MCF 10A (cell line): ENCODE measurements at regions of chr12 and their contacts with region 1.

Region 1: GRCh38 chr12:53938326-53939140 is at the start of gene HOXC13:
- DNase-seq: peak; percentile 100
- H3K4me3 Mint-ChIP-seq: peak within 1 kb of the TSS; percentile 78
- H3K27ac Mint-ChIP-seq: peak within 1 kb of the TSS; percentile 68
- H3K4me1 Mint-ChIP-seq: peaks cover 34% of the 10 kb centered on the region
- H3K27me3 Mint-ChIP-seq: no peaks in the 10 kb centered on the region
- CTCF ChIP-seq: peak; percentile 6
- total RNA-seq, gene HOXC13: 5.3 and 6.0 TPM in 2 replicates

Region 2: DNA sequence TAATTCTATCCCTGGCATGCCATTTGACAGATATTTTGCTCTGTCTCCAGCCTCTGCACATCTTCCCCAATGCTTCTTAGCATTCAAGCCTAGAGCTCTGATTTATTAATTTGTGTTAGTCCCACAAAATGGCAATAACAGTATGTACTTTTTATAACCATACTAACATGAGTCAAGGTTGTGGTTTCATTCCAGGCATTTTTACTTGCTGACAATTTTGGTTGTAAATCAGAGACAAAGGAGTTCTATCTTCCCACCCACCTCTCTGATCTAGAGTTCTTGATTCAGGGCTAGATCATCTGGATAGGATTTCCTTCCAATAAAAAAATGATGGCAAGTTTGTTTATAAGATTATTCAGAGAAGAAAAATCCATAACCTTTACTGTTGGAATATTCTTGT is 168.3 kb before region 1 on chr12:
- CTCF ChIA-PET with region 1: interaction called, 6 read pairs
- POLR2A ChIA-PET with region 1: interaction called, 21 read pairs
- intact Hi-C with region 1: no loop called
- DNase-seq: peak; percentile 61
- H3K4me3 Mint-ChIP-seq: peak overlapping the region; percentile 0
- H3K27ac Mint-ChIP-seq: peak overlapping the region; percentile 6
- H3K4me1 Mint-ChIP-seq: peaks cover 25% of the 10 kb centered on the region
- H3K27me3 Mint-ChIP-seq: no peaks in the 10 kb centered on the region
- CTCF ChIP-seq: no peak

Region 3: DNA sequence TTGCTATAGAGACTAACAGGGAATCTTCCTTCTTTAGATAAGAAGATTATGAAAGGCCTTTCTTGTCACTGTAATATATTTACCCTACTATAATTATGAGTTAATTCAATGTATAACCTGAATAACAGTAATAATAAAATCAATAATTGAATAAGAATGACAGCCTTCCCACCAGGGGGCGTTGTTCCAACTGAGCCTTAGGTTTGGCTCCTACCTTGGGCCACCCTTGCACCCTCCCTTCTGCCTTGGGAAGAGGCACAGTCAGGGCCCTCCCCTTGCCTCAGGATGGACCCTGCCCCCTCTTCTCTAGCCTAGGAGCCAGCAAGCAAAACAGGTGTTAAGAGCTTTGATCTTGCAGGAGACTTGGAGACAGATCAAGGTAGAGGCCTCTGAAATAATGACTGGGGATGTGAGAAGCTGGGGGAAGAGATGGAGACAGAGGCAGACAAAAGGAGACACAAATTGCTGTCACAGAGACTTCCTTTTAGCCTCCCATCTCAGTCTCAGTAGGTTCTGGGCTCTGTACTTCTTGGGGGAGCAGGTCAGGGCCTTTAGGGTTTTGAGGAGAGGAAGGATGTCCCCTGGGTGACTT is 146.7 kb before region 1 on chr12:
- CTCF ChIA-PET with region 1: interaction called, 12 read pairs
- POLR2A ChIA-PET with region 1: no interaction called
- intact Hi-C with region 1: loop called (anchors 5 kb)
- DNase-seq: peak; percentile 52
- H3K4me3 Mint-ChIP-seq: no peak overlapping the region
- H3K27ac Mint-ChIP-seq: no peak overlapping the region
- H3K4me1 Mint-ChIP-seq: no peaks in the 10 kb centered on the region
- H3K27me3 Mint-ChIP-seq: no peaks in the 10 kb centered on the region
- CTCF ChIP-seq: peak; percentile 44

Region 4: DNA sequence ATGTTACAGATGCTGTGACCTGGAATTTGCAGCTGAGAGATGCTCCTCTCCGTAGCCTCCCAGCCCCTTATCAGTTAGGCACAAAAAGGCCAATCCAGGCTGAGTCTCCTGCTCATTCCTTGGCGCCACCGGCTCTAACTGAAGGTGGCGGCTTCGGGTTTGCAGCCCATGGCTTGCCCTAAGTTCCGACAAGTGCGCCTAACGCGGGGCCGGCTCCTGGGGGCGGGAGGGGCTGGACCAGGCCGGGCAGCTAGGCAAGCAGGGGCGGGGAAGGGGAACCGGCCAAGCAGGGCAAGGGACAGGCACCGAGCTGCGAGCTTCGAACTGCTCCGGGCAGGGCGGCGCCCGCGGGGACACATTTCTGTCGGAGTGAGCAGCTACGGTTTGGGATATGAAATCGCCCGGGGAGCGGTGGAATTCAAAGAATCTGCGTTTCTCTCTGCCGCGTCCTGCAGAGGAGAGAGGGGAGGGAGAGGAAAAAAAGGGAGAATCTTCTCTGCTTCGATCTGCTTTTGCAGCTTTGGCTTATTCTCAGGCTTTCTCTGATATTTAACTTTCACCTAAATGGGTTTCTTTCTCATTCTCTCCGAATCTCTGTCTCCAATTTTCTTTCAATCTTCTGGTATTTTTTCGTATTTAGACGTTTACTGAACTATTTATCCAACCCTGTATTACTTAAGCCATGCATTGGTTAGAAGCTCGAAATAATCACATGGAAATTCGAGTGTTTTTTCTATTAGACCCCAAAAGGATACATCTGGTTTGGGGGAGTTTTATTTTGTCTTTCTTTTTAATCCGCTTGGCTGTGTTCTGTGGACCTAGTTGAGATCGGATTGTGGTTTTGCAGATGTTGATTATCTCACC is 14.6 kb after region 1 on chr12:
- CTCF ChIA-PET with region 1: no interaction called
- POLR2A ChIA-PET with region 1: interaction called, 16 read pairs
- intact Hi-C with region 1: no loop called
- DNase-seq: peak; percentile 12
- H3K4me3 Mint-ChIP-seq: peak overlapping the region; percentile 49
- H3K27ac Mint-ChIP-seq: no peak overlapping the region
- H3K4me1 Mint-ChIP-seq: no peaks in the 10 kb centered on the region
- H3K27me3 Mint-ChIP-seq: no peaks in the 10 kb centered on the region
- CTCF ChIP-seq: no peak

Region 5: DNA sequence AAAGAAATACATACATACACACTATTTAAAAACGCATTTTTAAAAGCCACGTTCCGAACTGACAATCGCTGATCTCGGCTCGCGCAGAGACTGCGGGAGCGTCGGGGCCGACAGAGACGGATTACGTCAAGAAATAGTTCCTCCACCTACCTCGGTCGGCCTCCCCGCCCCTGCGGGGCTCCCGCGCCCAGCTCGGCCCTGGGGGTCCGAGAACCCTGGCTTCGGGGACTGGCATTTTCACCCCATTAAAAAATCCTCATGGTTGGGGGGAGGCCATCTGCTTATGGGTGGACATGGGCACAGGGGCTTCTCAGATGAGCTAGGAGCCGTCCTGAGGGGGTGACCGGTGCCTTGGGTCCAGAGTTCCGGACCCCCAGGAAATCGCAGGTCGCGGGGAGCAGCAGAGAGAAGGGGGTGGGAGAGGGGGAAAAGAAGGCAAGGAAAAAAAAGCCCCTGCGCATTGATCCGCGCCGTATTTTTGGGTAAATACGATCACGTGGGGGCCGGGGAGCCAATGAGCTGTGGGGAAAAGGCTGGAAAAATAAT is 61.1 kb after region 1 on chr12:
- CTCF ChIA-PET with region 1: interaction called, 5 read pairs
- POLR2A ChIA-PET with region 1: interaction called, 32 read pairs
- intact Hi-C with region 1: no loop called
- DNase-seq: peak; percentile 90
- H3K4me3 Mint-ChIP-seq: peak overlapping the region; percentile 89
- H3K27ac Mint-ChIP-seq: peak overlapping the region; percentile 97
- H3K4me1 Mint-ChIP-seq: peaks cover 12% of the 10 kb centered on the region
- H3K27me3 Mint-ChIP-seq: no peaks in the 10 kb centered on the region
- CTCF ChIP-seq: no peak

Region 6: DNA sequence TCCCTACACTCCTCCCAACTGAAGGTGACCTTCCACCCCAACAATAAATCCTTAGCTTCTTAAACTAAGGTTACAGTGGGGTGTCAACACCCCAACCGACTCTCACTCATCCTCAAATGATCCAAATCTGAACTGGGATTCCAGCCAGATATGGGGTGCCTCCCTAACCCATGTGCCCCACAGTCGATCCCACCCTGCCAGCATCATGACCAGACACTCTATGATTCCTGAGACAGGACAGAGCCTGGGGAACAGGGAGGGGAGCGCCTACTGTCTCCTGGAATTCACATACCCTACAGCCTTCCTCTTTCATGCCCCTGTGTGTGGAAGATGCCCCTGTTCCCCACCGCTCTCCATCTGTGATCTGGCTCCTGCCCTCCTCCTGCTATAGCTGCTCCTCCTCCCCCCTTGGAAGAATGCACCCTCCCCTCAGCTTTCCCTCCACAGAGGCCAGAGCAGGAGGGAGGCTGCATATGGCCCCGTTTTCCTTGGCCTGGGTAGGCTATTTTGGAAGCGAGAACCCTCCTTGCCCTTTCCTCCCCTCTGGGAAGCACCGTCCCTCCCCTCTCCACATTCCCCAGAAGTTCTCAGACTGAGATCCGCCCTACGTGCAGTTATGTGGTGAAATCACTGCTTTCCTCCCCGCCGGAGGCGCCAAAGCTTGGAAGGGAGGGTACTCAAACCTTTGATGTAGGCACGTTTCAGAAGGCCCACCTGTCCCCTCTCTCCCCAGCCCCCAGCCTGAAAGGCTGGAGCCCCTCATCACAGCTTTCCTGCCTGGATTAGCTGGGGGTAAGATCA is 202.3 kb after region 1 on chr12:
- CTCF ChIA-PET with region 1: no interaction called
- POLR2A ChIA-PET with region 1: no interaction called
- intact Hi-C with region 1: no loop called
- DNase-seq: no peak
- H3K4me3 Mint-ChIP-seq: no peak overlapping the region
- H3K27ac Mint-ChIP-seq: no peak overlapping the region
- H3K4me1 Mint-ChIP-seq: no peaks in the 10 kb centered on the region
- H3K27me3 Mint-ChIP-seq: no peaks in the 10 kb centered on the region
- CTCF ChIP-seq: no peak